T-cell (primary cell): ENCODE measurements at regions of chr5 and their contacts with region 1.

Region 1: DNA sequence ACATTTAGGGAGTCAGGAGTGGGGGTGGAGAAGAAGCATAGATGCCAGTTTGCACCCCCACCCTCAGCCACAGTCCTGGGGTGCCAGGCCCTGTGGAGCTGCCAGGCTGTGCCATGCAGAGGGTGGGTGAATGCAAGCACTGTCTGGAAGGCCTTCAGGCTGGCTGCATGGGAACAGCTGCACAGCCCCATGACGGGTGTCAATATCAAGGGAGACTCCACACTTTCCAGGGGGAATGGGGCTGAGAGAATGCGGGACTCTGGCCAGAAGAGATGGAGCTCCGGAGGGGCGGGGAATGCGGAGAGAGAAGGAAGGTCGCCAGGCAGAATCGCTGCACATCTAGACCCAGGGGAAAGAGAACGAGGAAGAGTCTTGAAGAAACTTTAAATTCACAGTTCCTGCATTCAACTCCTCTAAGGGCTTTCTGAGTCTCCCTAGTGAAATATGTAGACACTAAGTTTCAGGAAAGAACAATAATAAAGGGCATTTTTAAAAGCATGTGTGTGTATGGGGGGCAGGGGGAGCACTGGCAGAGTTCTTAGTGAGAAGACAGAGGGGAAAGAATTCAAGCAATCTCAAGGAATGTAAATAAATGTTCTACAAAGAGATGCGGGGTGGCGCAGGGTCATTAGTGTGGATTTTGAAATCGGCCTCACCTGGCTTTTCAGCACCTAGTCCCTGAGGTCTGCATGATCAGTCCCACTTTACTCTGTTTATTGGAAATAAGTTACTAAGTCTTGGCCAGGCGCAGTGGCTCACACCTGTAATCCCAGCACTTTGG is 59.1 kb downstream of the BOD1 start:
- DNase-seq: no peak
- ATAC-seq: no peak
- H3K4me3 ChIP-seq: no peak overlapping the region
- H3K4me3 Mint-ChIP-seq: no peak overlapping the region
- H3K27ac ChIP-seq: no peak overlapping the region
- H3K27ac Mint-ChIP-seq: no peak overlapping the region
- H3K4me1 ChIP-seq: no peaks in the 10 kb centered on the region
- H3K4me1 Mint-ChIP-seq: no peaks in the 10 kb centered on the region
- H3K27me3 ChIP-seq: peaks cover 0 to 21% of the 10 kb centered on the region in 2 experiments
- H3K27me3 Mint-ChIP-seq: peaks cover 15 to 32% of the 10 kb centered on the region in 2 donors

Region 2: GRCh38 chr5:173383711-173384110 is 173.6 kb before region 1 on chr5:
- CTCF ChIA-PET with region 1: no interaction called
- POLR2A ChIA-PET with region 1: interaction called in 1 of 2 experiments, 15 read pairs
- DNase-seq: no peak
- ATAC-seq: no peak
- H3K4me3 ChIP-seq: no peak overlapping the region
- H3K4me3 Mint-ChIP-seq: no peak overlapping the region
- H3K27ac ChIP-seq: no peak overlapping the region
- H3K27ac Mint-ChIP-seq: no peak overlapping the region
- H3K4me1 ChIP-seq: no peaks in the 10 kb centered on the region
- H3K4me1 Mint-ChIP-seq: no peaks in the 10 kb centered on the region
- H3K27me3 ChIP-seq: peaks cover 0 to 9% of the 10 kb centered on the region in 2 experiments
- H3K27me3 Mint-ChIP-seq: peaks cover 6 to 16% of the 10 kb centered on the region in 2 donors

Region 3: DNA sequence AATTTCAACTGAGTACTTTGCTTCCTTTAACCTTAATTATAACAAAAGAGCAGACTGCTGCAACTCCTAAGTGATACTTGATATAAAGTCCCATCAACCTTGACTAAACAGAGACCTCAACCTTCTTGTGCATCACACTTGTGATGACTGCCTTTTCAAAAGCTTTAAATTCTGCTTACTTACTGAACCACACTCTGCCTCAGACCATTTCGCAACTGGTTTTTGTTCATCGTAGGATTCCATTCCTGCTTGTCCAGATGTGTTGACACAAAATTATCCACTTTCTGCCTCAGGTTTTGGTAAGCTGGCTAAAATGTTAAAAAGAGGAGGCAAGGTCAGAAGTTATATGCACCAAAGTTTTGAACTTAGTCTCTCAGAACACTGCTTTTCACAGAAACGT is 55.6 kb after region 1 on chr5:
- CTCF ChIA-PET with region 1: no interaction called
- POLR2A ChIA-PET with region 1: no interaction called
- DNase-seq: no peak
- ATAC-seq: no peak
- H3K4me3 ChIP-seq: no peak overlapping the region
- H3K4me3 Mint-ChIP-seq: no peak overlapping the region
- H3K27ac ChIP-seq: no peak overlapping the region
- H3K27ac Mint-ChIP-seq: no peak overlapping the region
- H3K4me1 ChIP-seq: peaks cover 18 to 21% of the 10 kb centered on the region in 2 experiments
- H3K4me1 Mint-ChIP-seq: peaks cover 55% of the 10 kb centered on the region in 3 donors
- H3K27me3 ChIP-seq: no peaks in the 10 kb centered on the region
- H3K27me3 Mint-ChIP-seq: no peaks in the 10 kb centered on the region